ENCODE measurements at regions of chr18 and their contacts with region 1.

Region 1: GRCh38 chr18:23452728-23453679 is at the start of gene RIOK3:
- DNase-seq: peak; percentile 97
- H3K4me3 Mint-ChIP-seq: peak within 1 kb of the TSS; percentile 99
- H3K27ac Mint-ChIP-seq: peak within 1 kb of the TSS; percentile 98
- H3K4me1 Mint-ChIP-seq: peaks cover 30% of the 10 kb centered on the region
- H3K27me3 Mint-ChIP-seq: no peaks in the 10 kb centered on the region
- CTCF ChIP-seq: no peak
- total RNA-seq, gene RIOK3: 96.7 and 97.1 TPM in 2 replicates

Region 2: DNA sequence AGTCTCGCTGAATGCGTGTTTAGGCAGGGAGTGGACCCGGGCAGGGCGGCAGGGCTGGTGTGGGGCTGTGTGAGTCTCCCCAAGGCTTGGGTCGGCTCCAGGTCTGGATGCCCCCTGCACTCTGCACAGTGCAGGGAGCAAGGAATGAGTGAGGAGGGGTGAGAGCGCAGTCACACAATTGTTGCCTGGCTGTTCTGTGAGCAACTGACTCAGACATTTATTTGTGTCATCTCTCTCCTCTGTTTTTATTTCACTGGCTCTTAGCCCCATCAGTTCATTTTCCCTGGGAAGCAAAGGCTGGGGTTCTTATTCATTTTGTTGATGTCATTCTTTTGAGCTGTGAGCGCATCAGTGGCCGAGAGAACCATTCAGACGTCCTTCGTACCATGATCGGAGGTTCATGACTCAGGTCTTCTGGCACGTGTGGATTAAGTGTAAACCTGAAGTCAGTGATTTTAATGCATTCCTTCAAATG is 1222.5 kb before region 1 on chr18:
- CTCF ChIA-PET with region 1: no interaction called
- POLR2A ChIA-PET with region 1: no interaction called
- intact Hi-C with region 1: no loop called
- DNase-seq: peak; percentile 34
- H3K4me3 Mint-ChIP-seq: no peak overlapping the region
- H3K27ac Mint-ChIP-seq: no peak overlapping the region
- H3K4me1 Mint-ChIP-seq: peaks cover 6% of the 10 kb centered on the region
- H3K27me3 Mint-ChIP-seq: no peaks in the 10 kb centered on the region
- CTCF ChIP-seq: no peak

Region 3: GRCh38 chr18:22933206-22933957 is 519.6 kb before region 1 on chr18 and contains the start of gene RBBP8:
- CTCF ChIA-PET with region 1: no interaction called
- POLR2A ChIA-PET with region 1: interaction called, 9 read pairs
- intact Hi-C with region 1: loop called (anchors 5 kb)
- DNase-seq: peak; percentile 85
- H3K4me3 Mint-ChIP-seq: peak within 1 kb of the TSS; percentile 95
- H3K27ac Mint-ChIP-seq: peak within 1 kb of the TSS; percentile 76
- H3K4me1 Mint-ChIP-seq: peaks cover 18% of the 10 kb centered on the region
- H3K27me3 Mint-ChIP-seq: no peaks in the 10 kb centered on the region
- CTCF ChIP-seq: no peak
- total RNA-seq, gene RBBP8: 42.0 and 59.7 TPM in 2 replicates

Region 4: DNA sequence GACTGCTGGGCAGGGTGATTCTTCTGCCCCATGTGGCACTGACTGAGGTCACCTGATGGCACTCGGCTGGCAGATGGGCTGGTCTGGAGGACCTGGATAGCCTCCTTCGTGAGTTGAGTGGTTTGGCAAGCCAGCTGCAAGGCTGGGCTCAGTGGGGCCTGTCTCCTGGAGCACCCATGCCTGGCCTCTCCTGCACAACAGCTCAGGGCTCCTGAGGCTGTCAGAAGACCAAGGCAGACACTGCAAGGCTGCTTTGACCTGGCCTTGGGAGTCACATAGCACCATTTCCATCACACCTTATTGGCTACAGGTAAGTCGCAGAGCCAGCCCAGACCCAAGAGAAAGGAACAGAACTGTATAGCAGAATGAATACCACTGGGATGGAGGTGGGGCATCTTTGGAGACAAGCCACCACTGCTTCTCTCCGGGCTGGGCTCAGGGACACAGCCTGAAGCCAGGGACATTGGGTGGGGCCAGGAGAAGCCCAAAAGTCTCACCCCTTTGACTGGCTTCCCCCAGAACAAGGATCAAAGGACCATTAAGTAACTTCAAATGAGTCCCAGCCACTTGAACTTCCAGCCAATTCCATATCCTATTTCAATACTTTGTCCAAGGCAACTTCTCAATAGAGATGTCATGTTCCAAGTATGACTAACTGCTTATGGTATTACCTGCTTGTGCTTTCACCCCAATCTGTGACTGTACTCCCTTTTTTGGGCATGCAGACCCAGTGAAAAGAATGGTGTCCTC is 161.4 kb before region 1 on chr18:
- CTCF ChIA-PET with region 1: no interaction called
- POLR2A ChIA-PET with region 1: no interaction called
- intact Hi-C with region 1: no loop called
- DNase-seq: peak; percentile 69
- H3K4me3 Mint-ChIP-seq: no peak overlapping the region
- H3K27ac Mint-ChIP-seq: peak overlapping the region; percentile 49
- H3K4me1 Mint-ChIP-seq: peaks cover 14% of the 10 kb centered on the region
- H3K27me3 Mint-ChIP-seq: no peaks in the 10 kb centered on the region
- CTCF ChIP-seq: no peak

Region 5: DNA sequence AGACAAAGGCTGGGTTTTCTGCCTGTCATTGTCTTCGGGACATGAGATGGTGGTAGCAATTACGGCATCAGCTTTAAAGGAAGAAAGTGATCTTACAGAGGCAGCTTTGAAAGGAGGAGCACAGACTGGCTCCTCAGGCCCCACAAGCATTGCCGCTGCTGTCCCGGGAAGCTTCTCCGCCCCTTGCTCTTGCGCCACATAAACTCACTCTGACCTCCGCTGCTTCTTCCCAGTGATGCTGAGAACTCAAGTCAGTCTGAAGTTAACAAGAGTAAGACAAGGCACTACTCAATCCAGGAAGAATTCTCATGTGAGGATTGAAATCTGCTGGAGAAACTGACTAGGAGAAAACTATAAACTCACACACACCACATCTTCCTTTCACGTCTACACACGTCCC is 112.3 kb before region 1 on chr18:
- CTCF ChIA-PET with region 1: no interaction called
- POLR2A ChIA-PET with region 1: no interaction called
- intact Hi-C with region 1: no loop called
- DNase-seq: no peak
- H3K4me3 Mint-ChIP-seq: no peak overlapping the region
- H3K27ac Mint-ChIP-seq: no peak overlapping the region
- H3K4me1 Mint-ChIP-seq: peaks cover 7% of the 10 kb centered on the region
- H3K27me3 Mint-ChIP-seq: no peaks in the 10 kb centered on the region
- CTCF ChIP-seq: no peak

Region 6: GRCh38 chr18:23422672-23423418 is 30.2 kb before region 1 on chr18:
- CTCF ChIA-PET with region 1: no interaction called
- POLR2A ChIA-PET with region 1: interaction called, 52 read pairs
- intact Hi-C with region 1: loop called (anchors 2 kb)
- DNase-seq: peak; percentile 93
- H3K4me3 Mint-ChIP-seq: peak overlapping the region; percentile 32
- H3K27ac Mint-ChIP-seq: peak overlapping the region; percentile 46
- H3K4me1 Mint-ChIP-seq: peaks cover 26% of the 10 kb centered on the region
- H3K27me3 Mint-ChIP-seq: no peaks in the 10 kb centered on the region
- CTCF ChIP-seq: no peak

Region 7: DNA sequence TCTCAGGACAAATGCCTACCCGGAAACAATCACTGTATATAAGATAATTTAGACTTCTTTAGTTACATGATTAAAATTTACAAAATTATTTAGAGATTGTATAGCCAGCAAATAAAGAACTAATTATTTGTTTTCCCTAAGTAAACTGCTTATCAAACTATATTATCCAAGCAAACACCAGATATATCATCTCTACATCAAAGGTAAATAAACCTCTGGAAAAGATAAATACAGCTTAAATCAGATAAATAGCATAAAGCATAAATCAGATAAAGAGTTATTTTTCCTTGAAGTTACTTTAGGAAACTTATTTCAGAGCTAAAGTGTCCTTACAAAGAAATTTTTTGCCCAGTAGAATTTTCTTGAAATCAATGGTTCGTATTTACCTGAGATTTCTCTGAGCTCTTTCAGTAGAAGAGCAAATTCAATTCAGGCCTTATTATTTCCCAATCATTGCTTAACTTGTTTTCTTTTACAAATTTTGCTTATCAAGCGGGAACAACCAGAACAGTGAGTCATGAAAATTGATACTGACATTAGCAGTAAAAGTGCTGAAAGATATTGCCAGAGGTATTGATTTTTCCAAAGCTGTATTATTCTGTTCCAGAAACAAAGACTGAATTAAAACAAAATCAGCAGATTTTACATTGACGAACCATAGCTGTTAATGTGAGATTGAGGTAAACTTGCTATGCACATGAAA is 10.2 kb before region 1 on chr18:
- CTCF ChIA-PET with region 1: interaction called, 3 read pairs
- POLR2A ChIA-PET with region 1: interaction called, 93 read pairs
- intact Hi-C with region 1: no loop called
- DNase-seq: no peak
- H3K4me3 Mint-ChIP-seq: no peak overlapping the region
- H3K27ac Mint-ChIP-seq: no peak overlapping the region
- H3K4me1 Mint-ChIP-seq: no peaks in the 10 kb centered on the region
- H3K27me3 Mint-ChIP-seq: no peaks in the 10 kb centered on the region
- CTCF ChIP-seq: no peak

Region 8: DNA sequence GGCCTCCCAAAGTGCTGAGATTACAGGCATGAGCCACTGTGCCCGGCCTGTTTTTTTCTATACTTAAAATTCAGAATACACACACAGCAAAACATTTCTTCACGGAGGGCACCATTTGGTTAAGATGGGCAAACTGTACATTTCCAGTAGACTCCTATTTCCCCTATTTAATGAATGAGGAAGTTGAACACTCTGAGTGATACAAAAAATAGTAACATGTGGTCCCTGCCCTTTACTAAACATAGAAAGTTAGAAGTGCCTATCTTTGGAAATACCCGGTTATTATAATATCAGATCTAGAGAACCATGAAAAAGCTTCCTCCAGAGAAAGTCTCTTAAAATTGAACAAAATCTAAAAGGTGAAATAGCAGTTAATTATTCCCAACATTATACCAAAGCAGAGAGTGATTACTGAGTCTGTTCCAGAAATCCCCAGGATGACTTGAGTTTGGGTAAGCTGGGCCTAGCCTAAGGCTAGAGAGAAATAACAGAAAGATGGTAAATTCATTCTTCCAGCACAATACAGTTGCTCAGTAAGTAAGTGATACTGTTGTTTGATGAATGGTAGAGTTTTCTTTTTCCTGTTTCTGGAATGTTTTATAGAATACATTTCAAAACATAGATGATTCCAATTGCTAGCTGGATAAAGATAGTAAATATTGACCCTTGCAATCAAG is 27.0 kb after region 1 on chr18:
- CTCF ChIA-PET with region 1: interaction called, 8 read pairs
- POLR2A ChIA-PET with region 1: interaction called, 22 read pairs
- intact Hi-C with region 1: no loop called
- DNase-seq: no peak
- H3K4me3 Mint-ChIP-seq: no peak overlapping the region
- H3K27ac Mint-ChIP-seq: no peak overlapping the region
- H3K4me1 Mint-ChIP-seq: no peaks in the 10 kb centered on the region
- H3K27me3 Mint-ChIP-seq: no peaks in the 10 kb centered on the region
- CTCF ChIP-seq: no peak

Region 9: GRCh38 chr18:23503038-23503962 is 50.3 kb after region 1 on chr18 and contains the start of gene RMC1:
- CTCF ChIA-PET with region 1: interaction called, 3 read pairs
- POLR2A ChIA-PET with region 1: interaction called, 27 read pairs
- intact Hi-C with region 1: no loop called
- DNase-seq: peak; percentile 91
- H3K4me3 Mint-ChIP-seq: peak within 1 kb of the TSS; percentile 81
- H3K27ac Mint-ChIP-seq: peak within 1 kb of the TSS; percentile 92
- H3K4me1 Mint-ChIP-seq: peaks cover 12% of the 10 kb centered on the region
- H3K27me3 Mint-ChIP-seq: no peaks in the 10 kb centered on the region
- CTCF ChIP-seq: no peak
- total RNA-seq, gene RMC1: 24.7 and 28.0 TPM in 2 replicates

Region 10: DNA sequence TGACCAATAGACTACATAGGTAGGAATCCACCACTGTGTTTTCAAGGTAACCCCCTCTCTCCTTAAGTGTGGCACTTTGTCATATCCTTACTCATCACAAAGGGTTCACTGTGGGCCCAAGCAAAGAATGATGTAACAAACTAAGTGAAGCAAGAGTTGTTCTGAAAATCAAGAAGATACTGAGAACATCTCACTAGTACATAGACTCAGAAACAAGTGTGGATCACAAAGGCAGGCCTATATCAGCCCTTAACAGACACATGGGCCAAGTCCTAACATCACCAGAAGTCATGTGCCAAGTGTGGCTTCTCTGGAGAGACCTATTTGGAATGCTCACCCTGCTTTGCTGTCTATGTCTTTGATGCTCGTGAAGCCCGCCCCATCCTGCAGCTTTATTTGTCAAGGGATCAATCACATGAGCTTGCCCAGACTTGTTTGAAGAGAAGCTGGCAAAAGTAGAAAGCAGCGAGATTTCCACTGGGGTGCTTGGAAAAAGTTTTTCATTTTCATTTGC is 430.3 kb after region 1 on chr18:
- CTCF ChIA-PET with region 1: no interaction called
- POLR2A ChIA-PET with region 1: interaction called, 10 read pairs
- intact Hi-C with region 1: no loop called
- DNase-seq: peak; percentile 80
- H3K4me3 Mint-ChIP-seq: peak overlapping the region; percentile 34
- H3K27ac Mint-ChIP-seq: peak overlapping the region; percentile 86
- H3K4me1 Mint-ChIP-seq: peaks cover 60% of the 10 kb centered on the region
- H3K27me3 Mint-ChIP-seq: no peaks in the 10 kb centered on the region
- CTCF ChIP-seq: no peak

Measured in MCF 10A (cell line).